ENCODE measurements at regions of chr9 and their contacts with region 1.

Region 1: DNA sequence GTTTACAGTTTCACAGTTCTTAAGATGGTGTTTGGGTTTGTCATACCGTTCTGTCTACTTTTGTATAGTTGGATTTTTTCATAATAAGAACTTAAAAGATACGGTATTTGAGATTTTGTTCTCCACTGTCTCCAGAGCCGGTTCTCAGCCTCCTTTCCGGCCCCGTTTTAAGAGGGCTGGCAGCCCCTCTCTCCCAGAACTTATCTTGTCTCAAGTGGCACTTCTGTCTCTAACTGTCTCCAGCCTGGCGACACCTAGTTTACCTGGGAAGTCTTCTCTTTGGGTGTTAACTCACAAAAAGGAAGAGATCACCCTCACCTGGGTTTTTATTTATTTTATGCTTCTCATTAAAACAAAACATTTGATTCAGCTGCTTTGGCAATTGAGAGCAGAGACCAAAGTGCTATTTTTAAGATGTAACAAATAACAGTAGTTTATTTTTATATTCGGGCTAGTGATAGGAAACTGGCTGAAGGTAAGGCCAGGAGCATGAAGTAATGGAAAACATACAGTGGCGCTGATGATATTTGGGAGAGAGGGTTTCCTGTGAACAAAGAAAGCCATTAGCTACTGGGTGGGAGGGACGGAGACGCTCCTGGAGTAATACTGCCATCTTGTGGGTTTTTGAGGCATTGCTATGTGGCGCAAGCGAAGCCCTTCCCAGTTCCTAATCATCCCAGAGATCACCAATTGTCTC is 48.3 kb downstream of the ACER2 start:
- DNase-seq: peak; percentile 71
- H3K4me3 Mint-ChIP-seq: peak overlapping the region; percentile 28
- H3K27ac Mint-ChIP-seq: no peak overlapping the region
- H3K4me1 Mint-ChIP-seq: peaks cover 8% of the 10 kb centered on the region
- H3K27me3 Mint-ChIP-seq: no peaks in the 10 kb centered on the region

Region 2: DNA sequence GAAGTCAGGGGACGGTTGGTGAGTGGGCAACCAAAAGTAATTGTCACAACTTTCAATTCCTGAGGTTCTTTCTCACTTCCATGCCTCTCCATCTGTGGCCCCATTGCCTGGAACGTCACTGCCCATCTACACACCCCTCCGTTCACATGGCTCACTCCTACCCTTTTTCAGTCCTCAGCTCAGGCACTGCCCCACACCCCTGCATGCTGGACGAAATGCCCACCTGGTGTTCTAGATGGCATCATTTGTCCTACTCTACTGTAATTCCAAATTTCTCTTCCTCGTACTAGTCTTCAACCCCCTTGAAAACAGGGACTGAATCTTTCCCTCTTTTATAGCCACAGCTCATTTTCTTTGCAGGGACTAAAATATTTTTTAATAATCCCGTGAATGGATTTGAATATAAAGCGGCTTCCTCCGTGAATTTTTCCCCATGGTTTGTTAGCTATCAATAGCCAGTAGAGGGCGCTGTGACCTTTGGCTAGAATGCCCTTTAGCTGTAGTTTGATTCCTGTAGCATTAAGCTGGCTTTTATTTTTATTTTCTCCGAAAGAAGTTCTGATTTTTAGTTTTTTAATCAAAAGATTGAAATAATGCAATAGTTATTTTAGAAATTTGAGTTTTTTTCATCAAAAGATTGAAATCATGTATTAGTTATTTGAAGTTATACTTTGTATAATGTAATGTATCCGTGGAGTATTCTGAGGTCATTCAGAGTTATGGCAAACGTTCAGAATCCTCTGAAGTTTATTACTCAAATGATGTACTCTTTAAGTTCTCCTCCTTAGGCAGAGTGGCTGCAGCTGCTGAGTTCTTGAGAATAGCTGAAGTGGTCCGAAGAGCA is 1646.2 kb before region 1 on chr9:
- CTCF ChIA-PET with region 1: no interaction called
- intact Hi-C with region 1: loop called (anchors 1 kb)
- DNase-seq: peak; percentile 63
- H3K4me3 Mint-ChIP-seq: no peak overlapping the region
- H3K27ac Mint-ChIP-seq: no peak overlapping the region
- H3K4me1 Mint-ChIP-seq: no peaks in the 10 kb centered on the region
- H3K27me3 Mint-ChIP-seq: peaks cover 5% of the 10 kb centered on the region

Region 3: DNA sequence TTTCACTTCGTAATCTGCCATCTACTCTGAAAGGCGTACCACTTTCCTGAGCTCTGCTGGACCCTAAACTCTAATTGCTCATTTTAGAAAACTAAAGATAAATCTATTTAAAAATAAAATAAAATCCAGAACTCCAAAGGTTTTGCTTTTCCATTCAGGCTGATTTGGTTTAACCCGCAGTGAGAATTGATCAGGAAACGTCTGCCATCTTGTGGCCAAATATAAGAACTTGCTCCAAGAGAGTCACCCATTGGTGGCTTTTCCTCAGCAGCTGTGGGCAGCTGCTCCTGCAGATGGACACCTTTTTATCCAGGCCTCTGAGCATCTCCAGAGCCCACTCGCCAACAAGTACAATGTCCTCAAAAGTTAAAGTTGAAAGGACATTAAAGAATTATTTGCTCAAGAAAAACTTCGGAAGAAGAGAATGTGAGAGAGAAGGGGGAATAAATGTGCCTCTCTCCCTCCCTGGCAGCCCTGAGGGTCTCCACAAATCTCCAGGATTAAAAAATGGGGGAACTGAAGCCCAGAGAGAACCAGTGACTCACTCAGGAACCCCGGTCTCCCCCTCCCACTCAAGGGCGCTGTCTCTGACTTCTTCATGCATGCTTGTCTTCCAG is 428.2 kb before region 1 on chr9:
- CTCF ChIA-PET with region 1: interaction called, 3 read pairs
- intact Hi-C with region 1: loop called (anchors 1 kb)
- DNase-seq: peak; percentile 54
- H3K4me3 Mint-ChIP-seq: no peak overlapping the region
- H3K27ac Mint-ChIP-seq: no peak overlapping the region
- H3K4me1 Mint-ChIP-seq: peaks cover 7% of the 10 kb centered on the region
- H3K27me3 Mint-ChIP-seq: peaks cover 10% of the 10 kb centered on the region

Region 4: DNA sequence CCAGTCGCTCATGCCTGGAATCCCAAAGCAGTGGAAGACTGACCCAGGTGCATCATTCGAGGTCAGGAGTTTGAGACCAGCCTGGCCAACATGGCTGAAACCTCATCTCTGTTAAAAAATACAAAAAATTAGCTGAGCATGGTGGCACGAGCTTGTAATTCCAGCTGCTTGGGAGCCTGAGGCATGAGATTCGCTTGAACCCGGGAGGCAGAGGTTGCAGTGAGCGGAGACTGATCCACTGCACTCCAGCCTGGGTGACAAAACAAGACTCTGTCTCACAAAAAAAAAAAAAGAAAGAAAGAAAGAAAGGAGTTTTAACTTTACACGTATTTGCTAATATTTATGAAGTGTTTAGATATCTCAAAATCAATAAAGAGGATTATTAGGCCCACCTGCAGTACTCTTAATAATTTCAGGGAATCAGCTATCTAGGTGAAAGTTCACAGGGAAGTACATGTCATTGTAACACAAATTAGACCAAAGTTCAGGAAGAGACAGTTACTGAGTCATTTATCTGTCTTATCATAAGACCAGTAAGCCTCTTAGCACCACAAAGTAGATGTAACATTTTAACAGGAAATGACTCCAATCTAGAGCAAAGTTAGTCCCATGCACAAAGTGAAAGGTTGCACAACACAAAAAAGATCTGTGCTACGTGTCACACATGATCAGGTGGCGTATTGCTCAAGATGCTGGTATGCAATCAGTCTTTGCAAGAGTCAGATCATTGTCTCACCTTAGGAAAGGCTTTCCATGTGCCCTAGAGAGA is 295.7 kb before region 1 on chr9:
- CTCF ChIA-PET with region 1: interaction called, 6 read pairs
- intact Hi-C with region 1: loop called (anchors 1 kb)
- DNase-seq: peak; percentile 87
- H3K4me3 Mint-ChIP-seq: no peak overlapping the region
- H3K27ac Mint-ChIP-seq: peak overlapping the region; percentile 81
- H3K4me1 Mint-ChIP-seq: peaks cover 23% of the 10 kb centered on the region
- H3K27me3 Mint-ChIP-seq: no peaks in the 10 kb centered on the region

Region 5: GRCh38 chr9:19230356-19231125 is 226.6 kb before region 1 on chr9 and contains the start of gene DENND4C:
- CTCF ChIA-PET with region 1: interaction called, 3 read pairs
- intact Hi-C with region 1: loop called (anchors 5 kb)
- DNase-seq: peak; percentile 78
- H3K4me3 Mint-ChIP-seq: peak within 1 kb of the TSS; percentile 67
- H3K27ac Mint-ChIP-seq: no peak within 1 kb of the TSS
- H3K4me1 Mint-ChIP-seq: peaks cover 15% of the 10 kb centered on the region
- H3K27me3 Mint-ChIP-seq: no peaks in the 10 kb centered on the region
- total RNA-seq, gene DENND4C: 8.7 to 9.0 TPM

Region 6: DNA sequence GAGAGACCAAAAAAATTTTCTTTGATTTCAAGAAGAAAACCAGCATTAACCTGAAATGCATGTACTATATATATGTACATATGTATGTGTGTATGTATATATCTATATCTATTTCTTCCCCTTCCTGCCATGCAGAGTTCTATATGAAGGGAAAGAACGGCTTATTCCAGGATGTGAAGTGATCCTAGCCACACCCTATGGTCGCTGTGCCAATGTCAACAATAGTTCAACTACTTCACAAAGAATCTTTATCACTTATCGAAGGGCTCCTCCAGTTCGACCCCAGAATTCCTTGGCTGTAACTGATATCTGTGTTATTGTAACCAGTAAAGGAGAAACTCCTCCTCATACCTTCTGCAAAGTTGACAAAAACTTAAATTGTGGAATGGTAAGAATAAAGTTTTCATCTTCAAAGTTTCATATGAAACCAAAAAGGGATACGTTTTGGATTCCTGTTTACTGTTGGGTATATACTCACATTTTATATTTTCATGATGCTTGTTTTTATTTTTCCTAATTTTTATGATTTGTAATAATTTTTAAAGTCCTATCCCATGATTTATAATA is 170.4 kb before region 1 on chr9:
- CTCF ChIA-PET with region 1: no interaction called
- intact Hi-C with region 1: no loop called
- DNase-seq: no peak
- H3K4me3 Mint-ChIP-seq: no peak overlapping the region
- H3K27ac Mint-ChIP-seq: no peak overlapping the region
- H3K4me1 Mint-ChIP-seq: peaks cover 13% of the 10 kb centered on the region
- H3K27me3 Mint-ChIP-seq: no peaks in the 10 kb centered on the region